Caco-2 (cell line): ENCODE measurements at regions of chr9 and their contacts with region 1.

Region 1: GRCh38 chr9:93453047-93453914 is at the start of gene FAM120AOS:
- DNase-seq: peak; percentile 82 to 87
- H3K4me3 ChIP-seq: peak within 1 kb of the TSS; percentile 86
- H3K4me3 Mint-ChIP-seq: peak within 1 kb of the TSS; percentile 93
- H3K27ac Mint-ChIP-seq: peak within 1 kb of the TSS; percentile 78
- H3K4me1 ChIP-seq: 0 out of 2 replicates have a peak, but pooled peaks cover 11% of the 10 kb centered on the region
- H3K4me1 Mint-ChIP-seq: peaks cover 5% of the 10 kb centered on the region
- H3K27me3 ChIP-seq: no peaks in the 10 kb centered on the region
- H3K27me3 Mint-ChIP-seq: no peaks in the 10 kb centered on the region
- CTCF ChIP-seq: no peak
- total RNA-seq, gene FAM120AOS: 30.1 and 36.0 TPM in 2 replicates

Region 2: GRCh38 chr9:93309889-93310425 is 143.3 kb before region 1 on chr9:
- CTCF ChIA-PET with region 1: no interaction called
- POLR2A ChIA-PET with region 1: no interaction called
- intact Hi-C with region 1: loop called (anchors 5 kb)
- DNase-seq: no peak
- H3K4me3 ChIP-seq: no peak overlapping the region
- H3K4me3 Mint-ChIP-seq: no peak overlapping the region
- H3K27ac Mint-ChIP-seq: peak overlapping the region; percentile 61
- H3K4me1 ChIP-seq: peaks cover 17% of the 10 kb centered on the region
- H3K4me1 Mint-ChIP-seq: peaks cover 10% of the 10 kb centered on the region
- H3K27me3 ChIP-seq: no peaks in the 10 kb centered on the region
- H3K27me3 Mint-ChIP-seq: no peaks in the 10 kb centered on the region
- CTCF ChIP-seq: no peak

Region 3: DNA sequence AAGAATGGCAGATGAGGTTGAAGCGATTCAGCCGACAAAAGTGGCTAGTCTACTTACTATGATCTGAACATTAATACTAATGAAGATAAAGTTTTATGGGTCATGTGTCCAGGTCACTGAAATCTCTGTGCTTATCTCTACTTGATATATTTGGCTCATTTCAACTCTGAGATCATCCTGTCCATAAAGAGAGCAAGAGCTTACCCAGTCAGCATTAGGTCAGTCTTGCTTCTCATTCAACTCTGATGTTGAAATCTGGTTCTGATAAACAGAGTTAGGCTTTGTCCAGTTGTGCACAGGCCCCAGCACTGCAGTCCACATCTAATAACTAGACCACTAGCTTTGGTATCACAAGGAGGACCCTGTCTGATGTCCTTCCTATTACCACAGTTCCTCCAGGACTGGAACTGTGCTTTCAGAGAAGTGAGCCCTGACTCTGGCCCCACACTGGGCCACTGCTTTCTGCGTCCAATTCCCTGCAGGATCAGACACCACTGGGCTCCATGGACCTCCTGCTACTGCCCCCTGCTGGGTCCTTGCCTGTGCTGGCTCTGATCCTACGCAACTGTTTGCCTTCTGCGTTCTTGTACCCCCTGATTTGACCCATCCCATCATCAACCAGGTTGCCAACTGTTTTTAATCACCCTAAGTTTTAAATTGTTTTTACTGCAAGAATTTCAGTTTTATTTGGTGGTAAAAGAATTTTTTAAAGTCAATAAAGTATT is 25.5 kb before region 1 on chr9:
- CTCF ChIA-PET with region 1: no interaction called
- POLR2A ChIA-PET with region 1: no interaction called
- intact Hi-C with region 1: no loop called
- DNase-seq: no peak
- H3K4me3 ChIP-seq: no peak overlapping the region
- H3K4me3 Mint-ChIP-seq: no peak overlapping the region
- H3K27ac Mint-ChIP-seq: no peak overlapping the region
- H3K4me1 ChIP-seq: peaks cover 12% of the 10 kb centered on the region; the same call in 1 of the 2 replicates
- H3K4me1 Mint-ChIP-seq: peaks cover 8% of the 10 kb centered on the region
- H3K27me3 ChIP-seq: no peaks in the 10 kb centered on the region
- H3K27me3 Mint-ChIP-seq: no peaks in the 10 kb centered on the region
- CTCF ChIP-seq: no peak